Posterior vena cava (tissue), 2 donors: ENCODE measurements at regions of chr6 and their contacts with region 1.

Region 1: GRCh38 chr6:30752157-30752927 is 8.0 kb upstream of the IER3 start:
- DNase-seq: peak; percentile 99

Region 2: GRCh38 chr6:30776390-30777154 is 24.2 kb after region 1 on chr6:
- intact Hi-C with region 1: loop called in 1 of 2 experiments (anchors 1 kb)
- DNase-seq: no peak

Region 3: DNA sequence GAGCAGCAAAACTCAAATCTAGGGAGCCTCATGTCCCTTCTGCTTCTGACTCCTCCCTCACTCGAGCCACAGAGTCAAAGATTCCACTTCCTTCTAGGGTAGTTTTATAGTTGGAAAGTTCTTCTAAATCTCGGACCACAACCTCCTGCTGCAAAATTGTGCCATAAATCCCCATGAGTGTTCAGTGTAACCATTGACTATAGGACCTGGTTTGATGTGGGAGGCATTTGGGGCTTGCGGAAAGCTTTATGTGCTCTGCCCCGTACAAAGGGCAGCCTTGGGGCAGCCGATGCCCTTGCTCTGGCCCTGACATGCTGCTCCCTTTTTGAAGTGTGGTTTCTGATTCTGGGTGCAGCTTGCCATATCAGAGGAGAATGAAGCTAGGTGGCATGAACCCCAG is 35.6 kb after region 1 on chr6:
- intact Hi-C with region 1: loop called in 1 of 2 experiments (anchors 5 kb)
- DNase-seq: no peak

Region 4: DNA sequence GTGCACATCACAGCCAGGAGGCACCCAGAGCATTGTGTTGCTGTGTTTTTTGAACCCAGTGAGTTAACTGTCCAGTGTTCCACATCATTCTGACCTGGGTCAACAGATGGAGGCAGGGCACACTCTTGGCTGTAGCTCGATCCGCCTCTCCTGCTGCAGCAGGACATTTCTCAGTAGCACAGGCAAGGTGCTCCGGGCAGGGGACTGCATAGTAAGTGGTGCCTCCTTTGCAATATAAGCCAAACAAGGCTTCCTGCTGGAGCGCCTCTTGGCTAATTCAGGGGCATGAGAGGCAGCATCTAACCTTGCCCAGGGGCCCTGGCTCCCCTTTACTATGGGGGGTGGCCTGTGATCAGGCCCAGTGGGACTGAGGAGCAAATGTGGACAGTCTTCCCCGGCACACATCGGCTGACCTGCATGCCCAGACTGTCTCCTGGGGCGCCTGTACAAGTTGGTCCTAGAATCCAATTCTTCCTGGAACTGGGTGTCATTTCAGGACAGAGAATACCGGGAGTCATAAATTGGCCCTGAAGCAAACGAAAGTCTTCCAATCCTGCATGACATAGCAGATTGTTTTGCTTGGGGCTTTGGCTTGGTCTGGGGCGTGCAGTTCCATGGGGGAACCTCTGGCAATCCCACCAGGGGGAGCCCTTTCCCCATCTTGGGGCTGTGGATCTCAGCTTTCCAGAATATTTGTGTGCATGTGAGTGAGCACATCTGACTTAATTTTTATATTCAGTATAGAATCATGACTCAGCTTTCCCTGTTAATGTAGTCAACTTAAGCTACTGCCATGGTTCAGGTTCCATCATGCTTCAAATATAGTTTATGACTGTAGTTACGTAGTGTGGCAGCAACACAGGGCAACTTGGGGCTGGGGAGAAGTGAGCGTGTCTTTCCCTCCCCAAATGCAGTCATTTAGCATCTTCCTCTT is 76.0 kb after region 1 on chr6:
- intact Hi-C with region 1: loop called in 1 of 2 experiments (anchors 5 kb)
- DNase-seq: peak; percentile 96